ENCODE measurements at regions of chr1 and their contacts with region 1.

Region 1: DNA sequence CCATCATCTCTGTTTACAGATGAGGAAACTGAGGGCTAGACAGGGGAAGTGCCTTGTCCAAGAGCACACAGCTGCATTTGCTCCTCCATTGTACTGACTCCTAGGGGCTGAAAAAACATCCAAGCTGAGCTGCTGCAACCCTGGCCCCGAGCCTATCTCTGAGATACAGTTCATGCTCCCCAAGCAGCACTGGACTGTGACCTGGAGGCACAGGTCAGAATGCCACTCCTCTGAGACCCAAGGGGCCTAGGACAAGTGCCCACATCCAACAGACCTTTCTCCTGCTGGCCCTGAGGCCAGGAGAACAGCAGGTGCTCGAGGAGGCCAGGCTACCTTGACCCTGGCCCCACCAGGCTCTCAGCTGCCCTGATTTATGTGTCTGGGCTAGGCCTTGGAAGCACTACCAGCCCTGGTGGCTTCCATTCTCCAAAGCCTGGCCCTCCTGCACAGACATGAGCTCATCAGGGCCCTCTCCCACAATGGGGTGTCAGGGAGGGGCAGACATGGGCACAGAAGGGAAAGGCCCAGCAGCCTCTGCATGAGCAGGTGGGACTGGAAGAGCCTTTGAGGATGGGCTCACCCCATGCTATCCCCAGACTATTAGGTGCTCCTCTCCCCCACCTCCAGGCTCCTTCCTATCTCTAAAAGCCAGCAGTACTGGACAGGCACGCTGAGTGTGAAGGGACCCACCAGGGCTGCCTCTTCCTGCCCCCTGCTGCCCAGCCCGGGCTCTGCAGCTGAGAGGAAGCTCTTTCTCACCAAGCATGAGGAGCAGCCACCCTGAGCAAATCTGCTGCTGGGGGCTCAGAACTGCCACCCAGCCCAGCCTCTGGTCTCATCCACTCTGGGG is 18.8 kb downstream of the ADGRB2 start:
- DNase-seq: no peak
- ATAC-seq: peak; percentile 92
- H3K4me3 ChIP-seq: no peak overlapping the region
- H3K27ac ChIP-seq: no peak overlapping the region
- H3K4me1 ChIP-seq: peaks cover 17% of the 10 kb centered on the region
- H3K27me3 ChIP-seq: no peaks in the 10 kb centered on the region; a peak in 1 of 4 replicates
- CTCF ChIP-seq: peak; percentile 69 to 87 (median 81)
- EP300 ChIP-seq: no peak
- POLR2A ChIP-seq: no peak
- RAD21 ChIP-seq: peak; percentile 71

Region 2: DNA sequence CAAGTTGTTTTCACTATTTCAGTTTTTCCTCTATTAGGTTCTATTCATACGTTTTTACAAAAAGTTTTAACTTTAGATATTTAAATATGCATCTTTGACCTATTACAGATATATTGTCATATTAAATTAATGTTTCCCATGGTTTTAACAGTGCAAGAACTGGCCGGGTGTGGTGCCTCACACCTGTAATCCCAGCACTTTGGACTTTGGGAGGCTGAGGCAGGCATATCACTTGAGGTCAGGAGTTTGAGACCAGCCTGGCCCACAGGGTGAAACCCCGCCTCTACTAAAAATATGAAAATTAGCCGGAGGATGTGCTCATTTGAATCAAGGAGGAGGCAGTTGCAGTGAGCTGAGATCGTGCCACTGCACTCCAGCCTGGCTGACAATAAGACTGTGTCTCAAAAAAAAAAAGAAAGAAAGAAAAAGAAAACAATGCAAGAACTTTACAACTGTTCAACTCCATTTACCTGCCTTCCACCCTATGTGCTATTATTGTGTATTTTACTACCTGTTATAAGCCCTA is 188.8 kb before region 1 on chr1:
- CTCF ChIA-PET with region 1: no interaction called
- POLR2A ChIA-PET with region 1: no interaction called
- RAD21 ChIA-PET with region 1: no interaction called
- SMC1A ChIA-PET with region 1: no interaction called
- in situ Hi-C with region 1: no loop called
- intact Hi-C with region 1: no loop called
- DNase-seq: no peak
- ATAC-seq: peak; percentile 52
- H3K4me3 ChIP-seq: no peak overlapping the region
- H3K27ac ChIP-seq: no peak overlapping the region
- H3K4me1 ChIP-seq: no peaks in the 10 kb centered on the region
- H3K27me3 ChIP-seq: no peaks in the 10 kb centered on the region
- CTCF ChIP-seq: no peak
- EP300 ChIP-seq: no peak
- POLR2A ChIP-seq: no peak
- RAD21 ChIP-seq: no peak

Region 3: DNA sequence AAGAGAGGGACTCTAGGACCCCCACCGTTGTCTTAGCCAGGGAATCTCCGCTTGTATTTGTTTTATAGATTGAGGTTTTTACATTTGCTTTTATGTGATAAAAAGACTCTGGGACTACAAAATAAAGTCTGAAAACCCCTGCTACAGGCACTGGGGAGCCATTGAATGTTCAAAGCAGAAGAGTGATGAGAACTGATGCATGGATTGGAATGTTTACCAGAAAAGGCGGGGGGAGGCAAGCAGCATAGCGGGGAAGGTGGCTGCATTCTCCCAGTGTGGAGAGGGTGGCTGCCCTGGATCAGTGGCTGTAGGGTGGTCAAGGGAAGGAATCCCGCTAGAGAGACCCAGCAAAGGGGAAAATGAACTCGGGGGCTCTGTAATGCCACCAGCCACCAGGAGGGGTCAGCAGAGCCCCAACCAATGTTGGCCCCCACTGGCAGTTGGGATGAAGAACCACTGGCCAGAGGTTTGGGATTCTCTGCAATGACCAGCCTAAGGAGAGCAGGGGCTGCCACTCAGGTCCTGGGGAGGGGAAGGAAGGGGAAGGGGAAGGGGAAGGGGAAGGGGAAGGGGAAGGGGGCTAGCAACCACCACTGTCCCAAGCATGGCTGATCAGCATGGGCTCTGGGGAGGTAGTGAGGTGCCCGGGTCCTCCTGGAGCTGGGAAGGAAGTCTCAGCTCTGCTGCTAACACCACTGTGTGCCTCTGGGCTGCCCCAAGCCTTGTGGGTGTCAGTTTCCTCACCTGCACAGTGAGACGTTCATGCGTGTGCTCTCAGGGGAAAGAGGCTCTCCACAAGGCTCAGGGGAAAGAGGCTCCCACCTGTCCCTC is 81.5 kb before region 1 on chr1:
- CTCF ChIA-PET with region 1: interaction called, 61 read pairs
- POLR2A ChIA-PET with region 1: no interaction called
- RAD21 ChIA-PET with region 1: interaction called, 28 read pairs
- SMC1A ChIA-PET with region 1: interaction called, 17 read pairs
- in situ Hi-C with region 1: no loop called
- intact Hi-C with region 1: loop called (anchors 1 kb)
- DNase-seq: no peak
- ATAC-seq: peak; percentile 60
- H3K4me3 ChIP-seq: no peak overlapping the region
- H3K27ac ChIP-seq: no peak overlapping the region
- H3K4me1 ChIP-seq: no peaks in the 10 kb centered on the region
- H3K27me3 ChIP-seq: no peaks in the 10 kb centered on the region; a peak in 1 of 4 replicates
- CTCF ChIP-seq: peak; percentile 92 to 95 (median 95)
- EP300 ChIP-seq: no peak
- POLR2A ChIP-seq: no peak
- RAD21 ChIP-seq: peak; percentile 93

Region 4: DNA sequence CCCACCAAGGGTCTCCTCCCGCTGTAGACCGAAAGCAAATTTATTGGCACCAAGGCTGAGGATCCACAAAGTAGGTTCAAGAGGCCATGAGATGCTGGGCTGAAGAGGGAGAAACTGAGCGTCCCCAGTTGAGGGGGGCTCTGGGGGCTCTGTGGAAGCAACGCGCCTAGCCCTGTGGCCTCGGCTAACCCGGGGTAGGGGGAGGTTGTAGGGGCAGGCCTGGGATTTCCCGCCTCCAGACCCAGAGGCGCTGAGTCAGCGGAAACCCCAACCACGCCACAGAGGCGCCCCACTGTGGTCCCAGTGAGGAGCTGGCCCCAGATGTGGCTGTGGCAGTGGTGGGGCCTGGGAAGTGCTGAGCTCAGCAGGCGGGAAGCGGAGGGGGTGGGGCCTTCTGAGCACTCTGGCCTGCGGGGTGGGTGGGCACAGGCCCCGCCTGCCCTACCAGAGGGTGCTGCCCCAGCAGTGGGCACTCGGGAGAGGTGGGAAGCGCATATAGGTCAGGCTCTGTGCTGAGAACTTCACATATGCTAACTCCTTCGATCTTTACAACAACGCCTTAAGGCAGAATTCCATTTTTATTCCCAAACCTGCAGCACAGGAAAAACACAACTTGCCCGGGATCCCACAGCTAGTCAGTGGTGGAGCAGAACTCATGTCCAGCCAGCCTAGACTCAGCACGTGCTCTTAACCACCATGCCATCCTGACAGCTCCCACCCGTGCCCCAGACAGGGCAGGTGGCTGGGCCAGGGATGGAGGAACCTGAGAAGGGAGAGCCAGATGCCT is 40.0 kb before region 1 on chr1:
- CTCF ChIA-PET with region 1: interaction called, 14 read pairs
- POLR2A ChIA-PET with region 1: no interaction called
- RAD21 ChIA-PET with region 1: interaction called, 18 read pairs
- SMC1A ChIA-PET with region 1: interaction called, 12 read pairs
- in situ Hi-C with region 1: no loop called
- intact Hi-C with region 1: no loop called
- DNase-seq: no peak
- ATAC-seq: peak; percentile 81
- H3K4me3 ChIP-seq: peak overlapping the region; percentile 2; the same call in 1 of the 2 replicates
- H3K27ac ChIP-seq: peak overlapping the region; percentile 62
- H3K4me1 ChIP-seq: peaks cover 45% of the 10 kb centered on the region
- H3K27me3 ChIP-seq: no peaks in the 10 kb centered on the region
- CTCF ChIP-seq: peak; percentile 32 to 78 (median 59); a peak in 5 of 6 replicates
- EP300 ChIP-seq: no peak
- POLR2A ChIP-seq: no peak
- RAD21 ChIP-seq: peak; percentile 79

Region 5: GRCh38 chr1:31733389-31734219 is 11.7 kb before region 1 on chr1:
- CTCF ChIA-PET with region 1: interaction called, 12 read pairs
- POLR2A ChIA-PET with region 1: interaction called, 3 read pairs
- RAD21 ChIA-PET with region 1: no interaction called
- SMC1A ChIA-PET with region 1: interaction called, 3 read pairs
- in situ Hi-C with region 1: no loop called
- intact Hi-C with region 1: no loop called
- DNase-seq: no peak
- ATAC-seq: no peak
- H3K4me3 ChIP-seq: no peak overlapping the region
- H3K27ac ChIP-seq: no peak overlapping the region
- H3K4me1 ChIP-seq: no peaks in the 10 kb centered on the region
- H3K27me3 ChIP-seq: no peaks in the 10 kb centered on the region; a peak in 2 of 4 replicates
- CTCF ChIP-seq: no peak
- EP300 ChIP-seq: no peak
- POLR2A ChIP-seq: no peak
- RAD21 ChIP-seq: no peak